ENCODE measurements at regions of chr6 and their contacts with region 1.

Region 1: GRCh38 chr6:10733863-10734262 is 11.0 kb downstream of the TMEM14C start:
- DNase-seq: no peak
- H3K4me3 ChIP-seq: no peak overlapping the region
- H3K27ac ChIP-seq: peak overlapping the region; percentile 2
- H3K4me1 ChIP-seq: peaks cover 6% of the 10 kb centered on the region
- H3K27me3 ChIP-seq: no peaks in the 10 kb centered on the region
- CTCF ChIP-seq: no peak
- POLR2A ChIP-seq: no peak

Region 2: GRCh38 chr6:10747251-10747972 is 13.5 kb after region 1 on chr6 and contains the start of gene TMEM14B:
- CTCF ChIA-PET with region 1: interaction called, 4 read pairs
- POLR2A ChIA-PET with region 1: interaction called, 3 read pairs
- dilution Hi-C with region 1: no loop called
- intact Hi-C with region 1: loop called (anchors 1 kb)
- DNase-seq: peak; percentile 97
- H3K4me3 ChIP-seq: peak within 1 kb of the TSS; percentile 59 to 94 (median 91)
- H3K27ac ChIP-seq: peak within 1 kb of the TSS; percentile 81
- H3K4me1 ChIP-seq: peaks cover 16% of the 10 kb centered on the region
- H3K27me3 ChIP-seq: no peaks in the 10 kb centered on the region
- CTCF ChIP-seq: no peak
- POLR2A ChIP-seq: peak; percentile 94
- total RNA-seq, gene TMEM14B: 54.6 and 58.2 TPM in 2 replicates

Region 3: DNA sequence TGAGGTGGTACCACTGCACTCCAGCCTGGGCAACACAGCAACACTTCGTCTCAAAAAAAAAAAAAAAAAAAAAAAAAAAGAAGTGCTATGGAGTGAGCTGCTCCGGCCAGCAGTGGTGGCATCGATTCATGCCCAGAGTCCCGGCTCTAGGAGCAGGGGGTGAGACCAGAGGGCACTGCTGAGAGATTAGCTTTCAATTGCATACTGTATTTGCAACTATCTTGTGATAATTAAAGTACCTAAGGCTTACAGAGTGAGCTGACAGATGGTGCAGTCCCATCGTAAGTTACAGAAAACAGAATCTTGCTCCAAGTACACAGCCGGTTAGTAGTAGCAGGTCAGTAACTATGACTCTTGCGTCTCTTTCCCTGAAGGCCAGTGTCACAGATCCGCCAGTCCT is 45.2 kb after region 1 on chr6:
- CTCF ChIA-PET with region 1: no interaction called
- POLR2A ChIA-PET with region 1: no interaction called
- dilution Hi-C with region 1: no loop called
- intact Hi-C with region 1: no loop called
- DNase-seq: no peak
- H3K4me3 ChIP-seq: no peak overlapping the region
- H3K27ac ChIP-seq: no peak overlapping the region
- H3K4me1 ChIP-seq: no peaks in the 10 kb centered on the region
- H3K27me3 ChIP-seq: no peaks in the 10 kb centered on the region
- CTCF ChIP-seq: no peak
- POLR2A ChIP-seq: no peak